ENCODE measurements at regions of chr19 and their contacts with region 1.

Region 1: DNA sequence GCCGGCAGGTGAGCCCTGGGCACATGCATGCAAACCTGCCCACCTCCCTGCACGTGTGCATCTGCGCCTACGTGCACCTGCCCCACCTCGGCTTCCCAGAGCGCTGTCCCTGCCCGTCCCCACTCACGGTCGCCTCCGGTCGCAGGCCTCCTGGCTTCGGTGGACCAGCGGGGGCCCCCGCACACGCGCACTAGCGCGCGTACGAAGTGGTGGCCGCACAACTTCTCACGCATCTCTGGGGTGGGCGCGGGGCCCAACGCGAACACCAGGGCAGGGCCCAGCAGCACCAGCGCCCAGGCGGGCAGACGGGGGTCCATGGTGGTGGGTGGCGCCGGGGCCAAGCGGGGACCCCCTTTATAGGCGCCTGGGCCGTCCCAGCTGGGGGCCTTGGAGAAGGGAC is at the start of gene INSL3:
- DNase-seq: no peak
- ATAC-seq: no peak
- H3K4me3 ChIP-seq: no peak within 1 kb of the TSS
- H3K27ac ChIP-seq: no peak within 1 kb of the TSS
- H3K4me1 ChIP-seq: no peaks in the 10 kb centered on the region
- H3K27me3 ChIP-seq: no peaks in the 10 kb centered on the region
- CTCF ChIP-seq: no peak
- total RNA-seq, gene INSL3: 0.57 TPM

Region 2: GRCh38 chr19:17565611-17566010 is 255.6 kb before region 1 on chr19:
- CTCF ChIA-PET with region 1: no interaction called
- POLR2A ChIA-PET with region 1: interaction called, 13 read pairs
- in situ Hi-C with region 1: no loop called
- intact Hi-C with region 1: no loop called
- DNase-seq: peak; percentile 41
- ATAC-seq: peak; percentile 48; the same call in 1 of the 2 replicates
- H3K4me3 ChIP-seq: no peak overlapping the region
- H3K27ac ChIP-seq: no peak overlapping the region
- H3K4me1 ChIP-seq: no peaks in the 10 kb centered on the region
- H3K27me3 ChIP-seq: no peaks in the 10 kb centered on the region
- CTCF ChIP-seq: no peak

Region 3: GRCh38 chr19:17832446-17833208 is 11.4 kb after region 1 on chr19:
- CTCF ChIA-PET with region 1: no interaction called
- POLR2A ChIA-PET with region 1: no interaction called
- in situ Hi-C with region 1: no loop called
- intact Hi-C with region 1: no loop called
- DNase-seq: no peak
- ATAC-seq: no peak
- H3K4me3 ChIP-seq: no peak overlapping the region
- H3K27ac ChIP-seq: no peak overlapping the region
- H3K4me1 ChIP-seq: no peaks in the 10 kb centered on the region
- H3K27me3 ChIP-seq: no peaks in the 10 kb centered on the region
- CTCF ChIP-seq: no peak

Measured in Panc1 (cell line).